ENCODE measurements at regions of chr14 and their contacts with region 1.

Region 1: GRCh38 chr14:31456841-31457664 is at the start of gene DTD2:
- DNase-seq: peak; percentile 94
- ATAC-seq: peak; percentile 99
- H3K4me3 Mint-ChIP-seq: peak within 1 kb of the TSS; percentile 99
- H3K27ac Mint-ChIP-seq: peak within 1 kb of the TSS; percentile 98
- H3K4me1 Mint-ChIP-seq: peaks cover 27% of the 10 kb centered on the region
- H3K27me3 Mint-ChIP-seq: peaks cover 5% of the 10 kb centered on the region
- total RNA-seq, gene DTD2: 15.7 to 17.7 TPM

Region 2: GRCh38 chr14:31420319-31421111 is 36.5 kb before region 1 on chr14 and contains the start of gene HEATR5A:
- CTCF ChIA-PET with region 1: interaction called, 18 read pairs
- POLR2A ChIA-PET with region 1: interaction called, 17 read pairs
- DNase-seq: peak; percentile 93
- ATAC-seq: peak; percentile 96
- H3K4me3 Mint-ChIP-seq: peak within 1 kb of the TSS; percentile 96
- H3K27ac Mint-ChIP-seq: peak within 1 kb of the TSS; percentile 86
- H3K4me1 Mint-ChIP-seq: peaks cover 19% of the 10 kb centered on the region
- H3K27me3 Mint-ChIP-seq: no peaks in the 10 kb centered on the region
- total RNA-seq, gene HEATR5A: 8.5 to 9.4 TPM

Measured in activated CD8-positive, alpha-beta T cell treated with anti-CD3 and anti-CD28 coated beads, Interleukin-2, amount 10 ng/mL, durations not matched to agents 7 days and 5 days (primary cell).